Activated naive CD4-positive, alpha-beta T cell treated with anti-CD3 and anti-CD28 coated beads for 36 hours (primary cell): ENCODE measurements at regions of chr12 and their contacts with region 1.

Region 1: GRCh38 chr12:2890388-2891239 is at the start of gene TULP3:
- DNase-seq: peak; percentile 98
- H3K4me3 Mint-ChIP-seq: peak within 1 kb of the TSS; percentile 85
- H3K27ac Mint-ChIP-seq: peak within 1 kb of the TSS; percentile 78
- H3K4me1 Mint-ChIP-seq: peaks cover 34% of the 10 kb centered on the region
- H3K27me3 Mint-ChIP-seq: no peaks in the 10 kb centered on the region
- total RNA-seq, gene TULP3: 4.1 to 4.4 TPM

Region 2: DNA sequence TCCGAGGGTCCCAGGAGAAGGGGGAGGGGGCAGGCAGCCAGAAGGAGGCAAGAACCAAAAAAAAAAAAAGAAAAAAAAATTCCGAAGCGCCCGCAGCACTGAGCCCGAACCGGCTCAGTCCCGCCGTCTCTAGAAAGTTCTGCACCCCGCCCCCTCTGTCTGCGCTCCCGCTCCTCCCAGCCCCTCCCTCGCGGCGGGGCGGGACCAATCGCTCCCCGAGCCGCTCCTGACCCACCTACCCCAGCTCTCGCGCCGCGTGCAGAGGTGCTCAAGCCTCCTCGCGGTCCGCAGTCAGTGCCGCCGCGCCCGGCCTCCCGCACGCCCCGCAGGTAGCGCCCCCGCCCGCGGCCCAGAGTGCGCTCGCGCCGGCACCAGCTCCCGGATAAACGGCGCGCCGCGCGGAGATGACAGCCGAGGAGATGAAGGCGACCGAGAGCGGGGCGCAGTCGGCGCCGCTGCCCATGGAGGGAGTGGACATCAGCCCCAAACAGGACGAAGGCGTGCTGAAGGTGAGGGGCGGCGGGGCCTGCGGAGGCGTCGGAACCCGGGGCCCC is 95.8 kb before region 1 on chr12 and contains the start of gene FKBP4:
- CTCF ChIA-PET with region 1: no interaction called
- intact Hi-C with region 1: loop called (anchors 2 kb)
- DNase-seq: peak; percentile 91
- H3K4me3 Mint-ChIP-seq: peak within 1 kb of the TSS; percentile 88
- H3K27ac Mint-ChIP-seq: peak within 1 kb of the TSS; percentile 68
- H3K4me1 Mint-ChIP-seq: peaks cover 26% of the 10 kb centered on the region
- H3K27me3 Mint-ChIP-seq: no peaks in the 10 kb centered on the region
- total RNA-seq, gene FKBP4: 139 TPM

Region 3: GRCh38 chr12:2812290-2813213 is 78.1 kb before region 1 on chr12 and contains the start of gene ITFG2:
- CTCF ChIA-PET with region 1: no interaction called
- intact Hi-C with region 1: loop called (anchors 1 kb)
- DNase-seq: peak; percentile 98
- H3K4me3 Mint-ChIP-seq: peak within 1 kb of the TSS; percentile 99
- H3K27ac Mint-ChIP-seq: peak within 1 kb of the TSS; percentile 98
- H3K4me1 Mint-ChIP-seq: peaks cover 25% of the 10 kb centered on the region
- H3K27me3 Mint-ChIP-seq: no peaks in the 10 kb centered on the region
- total RNA-seq, gene ITFG2: 27.5 to 30.5 TPM

Region 4: GRCh38 chr12:2877047-2877952 is 13.3 kb before region 1 on chr12 and contains the starts of genes FOXM1 and RHNO1:
- CTCF ChIA-PET with region 1: interaction called, 7 read pairs
- intact Hi-C with region 1: loop called (anchors 1 kb)
- DNase-seq: peak; percentile 89
- H3K4me3 Mint-ChIP-seq: peak within 1 kb of the TSS; percentile 95
- H3K27ac Mint-ChIP-seq: peak within 1 kb of the TSS; percentile 94
- H3K4me1 Mint-ChIP-seq: peaks cover 30% of the 10 kb centered on the region
- H3K27me3 Mint-ChIP-seq: no peaks in the 10 kb centered on the region
- total RNA-seq, gene FOXM1: 74.6 to 80.5 TPM
- total RNA-seq, gene RHNO1: 64.6 to 68.1 TPM

Region 5: DNA sequence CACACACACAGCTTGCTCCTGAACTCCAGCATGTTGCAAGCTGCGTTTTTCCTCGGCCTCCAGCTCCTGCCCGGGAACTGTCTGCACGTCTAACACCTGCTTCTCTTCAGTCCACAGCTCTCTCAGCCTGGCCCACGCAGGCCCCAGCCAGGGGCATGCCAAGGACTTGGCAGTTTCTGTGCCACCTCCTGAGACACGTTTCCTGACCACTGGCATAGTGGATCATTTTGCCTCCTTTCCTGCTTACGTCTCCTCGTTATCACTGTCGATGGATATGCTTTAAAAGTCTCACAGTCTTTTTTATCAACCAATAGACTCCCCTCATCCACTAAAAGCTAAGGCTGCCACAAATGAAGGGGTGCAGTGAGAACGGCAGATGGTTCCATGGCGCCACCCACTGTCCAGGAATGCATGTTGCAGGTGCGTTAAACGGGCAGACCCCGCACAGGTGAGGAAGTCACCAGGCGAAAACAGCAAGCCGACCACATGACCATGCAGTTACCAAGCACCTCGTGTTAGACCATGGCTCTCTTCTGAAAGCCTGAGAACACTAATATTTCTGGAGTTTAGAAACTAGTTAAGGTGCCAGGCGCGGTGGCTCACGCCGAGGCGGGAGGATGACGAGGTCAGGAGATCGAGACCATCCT is 53.9 kb after region 1 on chr12:
- CTCF ChIA-PET with region 1: interaction called, 4 read pairs
- intact Hi-C with region 1: loop called (anchors 2 kb)
- DNase-seq: peak; percentile 77
- H3K4me3 Mint-ChIP-seq: peak overlapping the region; percentile 36
- H3K27ac Mint-ChIP-seq: no peak overlapping the region
- H3K4me1 Mint-ChIP-seq: peaks cover 2% of the 10 kb centered on the region
- H3K27me3 Mint-ChIP-seq: peaks cover 3% of the 10 kb centered on the region

Region 6: DNA sequence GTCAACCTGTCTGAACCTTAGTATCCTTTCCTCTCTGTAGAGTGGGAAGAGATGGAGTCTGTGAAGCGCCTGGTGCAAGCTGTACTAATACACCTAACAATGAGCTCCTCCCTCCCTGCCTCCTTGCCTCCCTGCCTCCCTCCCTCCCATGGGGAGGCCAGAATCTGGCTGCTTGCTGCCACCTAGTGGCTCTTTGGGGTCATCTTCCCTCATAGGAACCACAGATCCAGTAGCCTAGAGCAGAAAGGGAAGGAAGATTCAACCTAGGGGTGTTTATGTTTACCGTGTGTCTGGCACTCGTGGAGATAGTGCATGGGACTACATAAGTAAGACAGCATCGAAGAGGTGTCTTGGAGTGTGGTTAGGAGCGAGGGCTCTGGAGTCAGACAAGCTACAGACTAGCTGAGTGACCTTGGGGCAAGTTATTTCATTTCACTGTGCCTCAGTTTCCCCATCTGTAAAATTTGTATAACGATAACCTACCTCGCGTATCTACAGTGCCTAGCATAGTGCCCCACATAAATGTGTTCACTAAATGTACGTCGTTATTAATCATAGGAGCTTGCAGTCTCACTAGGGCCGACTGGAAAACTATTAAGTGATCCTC is 151.0 kb after region 1 on chr12:
- CTCF ChIA-PET with region 1: no interaction called
- intact Hi-C with region 1: loop called (anchors 2 kb)
- DNase-seq: peak; percentile 79
- H3K4me3 Mint-ChIP-seq: no peak overlapping the region
- H3K27ac Mint-ChIP-seq: no peak overlapping the region
- H3K4me1 Mint-ChIP-seq: no peaks in the 10 kb centered on the region
- H3K27me3 Mint-ChIP-seq: peaks cover 14% of the 10 kb centered on the region